Activated T-helper 2 cell treated with anti-CD3 and anti-CD28 coated beads, Interferon-gamma antibody, Interleukin-2, Interleukin-4, amounts not matched to agents 10 μg/mL and 5 μg/mL and 100 μg/mL, durations not matched to agents 14 hours and 24 hours and 36 hours (primary cell): ENCODE measurements at regions of chr7 and their contacts with region 1.

Region 1: GRCh38 chr7:7920481-7920880 is 48.1 kb upstream of the GLCCI1 start:
- DNase-seq: no peak
- H3K4me3 Mint-ChIP-seq: no peak overlapping the region
- H3K27ac Mint-ChIP-seq: no peak overlapping the region
- H3K4me1 Mint-ChIP-seq: peaks cover 36% of the 10 kb centered on the region
- H3K27me3 Mint-ChIP-seq: no peaks in the 10 kb centered on the region

Region 2: DNA sequence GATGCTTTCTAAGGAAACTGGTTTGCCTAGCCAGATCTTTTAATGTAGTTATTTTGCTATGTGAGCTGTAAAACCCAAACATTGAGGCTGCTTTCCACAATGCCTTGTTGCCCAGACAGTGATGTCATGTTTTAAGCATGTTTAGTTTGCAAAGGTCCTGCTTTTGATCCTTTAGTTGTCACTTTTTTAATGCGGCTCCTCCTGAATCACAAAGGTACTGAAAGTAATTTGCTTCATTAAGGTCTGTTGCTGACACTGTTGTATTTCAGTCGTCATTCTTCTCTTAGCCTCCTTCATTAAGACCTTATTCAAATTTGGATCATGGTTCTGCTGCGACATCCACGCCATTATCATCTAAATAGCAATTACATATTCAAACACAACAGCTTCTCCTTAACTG is 212.7 kb before region 1 on chr7:
- intact Hi-C with region 1: no loop called
- DNase-seq: no peak
- H3K4me3 Mint-ChIP-seq: no peak overlapping the region
- H3K27ac Mint-ChIP-seq: no peak overlapping the region
- H3K4me1 Mint-ChIP-seq: peaks cover 11% of the 10 kb centered on the region
- H3K27me3 Mint-ChIP-seq: no peaks in the 10 kb centered on the region

Region 3: GRCh38 chr7:8042796-8043535 is 122.5 kb after region 1 on chr7:
- intact Hi-C with region 1: loop called (anchors 5 kb)
- DNase-seq: no peak
- H3K4me3 Mint-ChIP-seq: no peak overlapping the region
- H3K27ac Mint-ChIP-seq: peak overlapping the region; percentile 49
- H3K4me1 Mint-ChIP-seq: peaks cover 56% of the 10 kb centered on the region
- H3K27me3 Mint-ChIP-seq: no peaks in the 10 kb centered on the region